Astrocyte of the cerebellum (primary cell): ENCODE measurements at regions of chr5 and their contacts with region 1.

Region 1: DNA sequence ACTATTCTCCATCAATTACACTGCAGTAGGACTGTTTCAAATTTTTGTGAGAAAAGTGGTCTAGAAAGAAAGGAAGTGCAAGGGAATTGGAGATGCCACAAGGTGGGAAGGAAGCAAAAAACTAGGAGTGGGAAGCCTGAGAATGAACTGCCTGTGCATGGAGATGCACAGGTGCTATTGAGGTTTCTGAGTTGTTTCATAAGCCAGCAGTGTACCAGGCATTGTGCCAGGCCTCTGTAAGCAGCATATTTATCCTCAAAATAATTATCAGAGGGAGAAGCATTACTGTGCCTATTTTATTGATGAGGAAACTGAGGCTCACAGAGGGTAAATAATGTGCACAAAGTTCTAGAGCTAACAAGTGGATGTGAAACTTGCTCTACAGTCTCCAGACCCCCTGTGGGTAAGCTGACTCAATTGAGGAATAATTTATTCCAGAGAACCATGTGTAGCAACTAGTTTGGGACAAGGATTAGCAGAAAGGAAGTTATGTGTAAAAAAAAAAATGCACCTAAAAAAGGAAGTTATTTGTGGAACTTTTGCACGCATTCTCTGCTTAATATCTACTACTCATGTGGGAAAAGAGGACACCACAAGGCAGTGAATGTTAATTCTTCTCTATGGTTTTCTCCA is 96.7 kb downstream of the SNCAIP start:
- DNase-seq: peak; percentile 28
- H3K4me3 ChIP-seq: no peak overlapping the region
- CTCF ChIP-seq: no peak

Region 2: GRCh38 chr5:122182491-122182921 is 226.2 kb before region 1 on chr5:
- in situ Hi-C with region 1: loop called (anchors 10 kb)
- DNase-seq: peak; percentile 90
- H3K4me3 ChIP-seq: peak overlapping the region; percentile 1
- CTCF ChIP-seq: no peak